Common myeloid progenitor, CD34-positive (primary cell): ENCODE measurements at regions of chrX and their contacts with region 1.

Region 1: DNA sequence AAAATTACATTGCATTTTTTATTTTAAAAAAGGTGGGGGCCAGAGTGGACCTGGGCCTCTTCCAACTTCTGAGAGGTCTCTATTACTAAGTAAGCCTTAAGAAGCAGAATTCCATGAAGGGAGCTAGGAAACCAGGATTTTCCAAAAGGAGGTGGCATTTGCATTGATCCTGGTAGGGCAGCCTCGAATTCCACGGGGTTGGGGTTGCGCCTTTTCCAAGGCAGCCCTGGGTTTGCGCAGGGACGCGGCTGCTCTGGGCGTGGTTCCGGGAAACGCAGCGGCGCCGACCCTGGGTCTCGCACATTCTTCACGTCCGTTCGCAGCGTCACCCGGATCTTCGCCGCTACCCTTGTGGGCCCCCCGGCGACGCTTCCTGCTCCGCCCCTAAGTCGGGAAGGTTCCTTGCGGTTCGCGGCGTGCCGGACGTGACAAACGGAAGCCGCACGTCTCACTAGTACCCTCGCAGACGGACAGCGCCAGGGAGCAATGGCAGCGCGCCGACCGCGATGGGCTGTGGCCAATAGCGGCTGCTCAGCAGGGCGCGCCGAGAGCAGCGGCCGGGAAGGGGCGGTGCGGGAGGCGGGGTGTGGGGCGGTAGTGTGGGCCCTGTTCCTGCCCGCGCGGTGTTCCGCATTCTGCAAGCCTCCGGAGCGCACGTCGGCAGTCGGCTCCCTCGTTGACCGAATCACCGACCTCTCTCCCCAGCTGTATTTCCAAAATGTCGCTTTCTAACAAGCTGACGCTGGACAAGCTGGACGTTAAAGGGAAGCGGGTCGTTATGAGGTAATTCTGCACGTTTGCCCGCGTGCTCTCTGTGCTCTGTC is at the start of gene PGK1:
- DNase-seq: peak; percentile 97 to 99 (median 99)
- H3K4me3 ChIP-seq: peak within 1 kb of the TSS; percentile 75 to 95 (median 91)
- H3K27ac ChIP-seq: peak within 1 kb of the TSS; percentile 88 to 96
- H3K4me1 ChIP-seq: peaks cover 14 to 48% (median 27%) of the 10 kb centered on the region in 4 experiments
- H3K27me3 ChIP-seq: no peaks in the 10 kb centered on the region

Region 2: DNA sequence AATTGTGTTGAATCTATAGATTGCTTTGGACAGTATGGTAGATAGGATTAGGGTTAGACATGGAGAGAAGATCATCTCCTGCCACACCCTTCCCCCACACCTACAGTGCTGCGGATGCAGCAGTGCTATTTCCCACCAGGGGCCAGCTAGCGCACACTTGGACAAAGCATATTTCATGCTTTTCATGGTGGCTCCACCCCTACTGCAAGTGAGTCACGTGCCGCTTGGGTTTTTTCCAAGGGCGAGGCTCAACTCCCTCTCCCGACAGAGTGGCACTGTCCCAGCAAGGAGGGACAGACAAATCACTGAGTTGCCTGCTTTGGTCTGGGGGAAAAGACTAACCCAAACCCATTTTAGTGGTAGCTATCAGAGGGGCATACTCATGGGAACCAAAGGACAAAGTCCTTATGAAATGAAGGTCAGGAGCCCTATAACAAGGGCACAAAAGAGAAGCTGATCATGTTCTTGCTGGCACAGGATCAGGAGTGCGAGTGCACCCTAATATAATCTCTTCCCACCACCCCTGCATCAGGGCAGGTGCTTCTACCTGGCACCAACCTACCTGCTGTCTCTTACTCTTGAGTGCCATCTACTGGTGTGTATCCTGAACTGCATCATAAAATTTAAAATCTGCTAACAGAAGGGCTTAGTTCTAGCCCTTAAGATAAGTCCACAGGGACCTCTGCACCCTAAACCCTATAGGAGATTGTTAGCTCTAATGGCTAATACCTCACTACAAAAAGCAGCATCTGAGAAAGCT is 79.3 kb before region 1 on chrX:
- CTCF ChIA-PET with region 1: no interaction called
- POLR2A ChIA-PET with region 1: no interaction called
- DNase-seq: peak; percentile 27 to 49 (median 47)
- H3K4me3 ChIP-seq: peak overlapping the region in 1 of 7 experiments; percentile 42
- H3K27ac ChIP-seq: no peak overlapping the region
- H3K4me1 ChIP-seq: no peaks in the 10 kb centered on the region
- H3K27me3 ChIP-seq: no peaks in the 10 kb centered on the region

Region 3: DNA sequence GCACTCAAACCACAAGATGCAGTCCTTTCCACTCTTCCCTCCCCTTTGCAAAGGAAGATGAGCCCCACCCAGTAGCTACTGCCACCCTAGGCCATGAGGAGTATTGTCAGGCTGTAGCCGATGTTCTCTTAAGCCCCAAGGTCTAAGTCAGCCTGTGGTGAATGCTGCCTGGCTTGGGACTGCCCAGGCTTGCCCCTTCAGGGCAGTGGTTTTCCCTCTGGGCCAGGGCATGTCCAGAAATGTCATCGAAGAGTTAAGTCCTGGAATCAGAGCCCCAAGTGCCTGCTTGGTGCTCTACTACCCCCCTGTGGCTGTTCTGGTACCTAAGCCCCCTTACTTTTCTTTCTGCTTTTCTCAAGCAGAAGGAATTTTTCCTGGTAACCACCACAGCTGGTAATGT is 11.5 kb before region 1 on chrX:
- CTCF ChIA-PET with region 1: interaction called, 16 read pairs
- POLR2A ChIA-PET with region 1: no interaction called
- DNase-seq: peak in 2 of 3 donors; percentile 45 to 48
- H3K4me3 ChIP-seq: peak overlapping the region in 1 of 7 experiments; percentile 52
- H3K27ac ChIP-seq: no peak overlapping the region
- H3K4me1 ChIP-seq: no peaks in the 10 kb centered on the region
- H3K27me3 ChIP-seq: no peaks in the 10 kb centered on the region

Region 4: GRCh38 chrX:78119521-78120227 is 15.8 kb after region 1 on chrX:
- CTCF ChIA-PET with region 1: interaction called, 15 read pairs
- POLR2A ChIA-PET with region 1: interaction called, 5 read pairs
- DNase-seq: peak in 1 of 3 donors; percentile 28
- H3K4me3 ChIP-seq: no peak overlapping the region
- H3K27ac ChIP-seq: no peak overlapping the region
- H3K4me1 ChIP-seq: peaks cover 0 to 10% (median 2%) of the 10 kb centered on the region in 4 experiments
- H3K27me3 ChIP-seq: no peaks in the 10 kb centered on the region